Body of pancreas (tissue), 4 donors: ENCODE measurements at regions of chr16 and their contacts with region 1.

Region 1: GRCh38 chr16:15548482-15548891 is 94.5 kb downstream of the MARF1 start:
- DNase-seq: no peak
- ATAC-seq: no peak
- H3K4me3 ChIP-seq: no peak overlapping the region
- H3K27ac ChIP-seq: no peak overlapping the region
- H3K4me1 ChIP-seq: peaks cover 11% of the 10 kb centered on the region
- H3K27me3 ChIP-seq: no peaks in the 10 kb centered on the region
- CTCF ChIP-seq: no peak
- POLR2A ChIP-seq: no peak

Region 2: GRCh38 chr16:14667347-14668266 is 880.9 kb before region 1 on chr16:
- intact Hi-C with region 1: no loop called
- DNase-seq: peak in 3 of 4 donors; percentile 17 to 38 (median 25)
- ATAC-seq: no peak
- H3K4me3 ChIP-seq: no peak overlapping the region
- H3K27ac ChIP-seq: peak overlapping the region in 3 of 4 donors; percentile 33 to 62 (median 47)
- H3K4me1 ChIP-seq: peaks cover 53% of the 10 kb centered on the region
- H3K27me3 ChIP-seq: no peaks in the 10 kb centered on the region
- CTCF ChIP-seq: no peak
- POLR2A ChIP-seq: no peak

Region 3: GRCh38 chr16:15434425-15435215 is 113.9 kb before region 1 on chr16 and contains the start of gene BMERB1:
- intact Hi-C with region 1: loop called (anchors 5 kb)
- DNase-seq: peak; percentile 70 to 75 (median 71)
- ATAC-seq: peak; percentile 84
- H3K4me3 ChIP-seq: peak within 1 kb of the TSS; percentile 70 to 78
- H3K27ac ChIP-seq: peak within 1 kb of the TSS in 3 of 4 donors; percentile 41 to 65 (median 44)
- H3K4me1 ChIP-seq: peaks cover 12% of the 10 kb centered on the region
- H3K27me3 ChIP-seq: no peaks in the 10 kb centered on the region
- CTCF ChIP-seq: no peak
- POLR2A ChIP-seq: peak in 2 of 3 donors; percentile 55 to 66
- total RNA-seq, gene BMERB1: 8.9 to 22.3 TPM

Region 4: DNA sequence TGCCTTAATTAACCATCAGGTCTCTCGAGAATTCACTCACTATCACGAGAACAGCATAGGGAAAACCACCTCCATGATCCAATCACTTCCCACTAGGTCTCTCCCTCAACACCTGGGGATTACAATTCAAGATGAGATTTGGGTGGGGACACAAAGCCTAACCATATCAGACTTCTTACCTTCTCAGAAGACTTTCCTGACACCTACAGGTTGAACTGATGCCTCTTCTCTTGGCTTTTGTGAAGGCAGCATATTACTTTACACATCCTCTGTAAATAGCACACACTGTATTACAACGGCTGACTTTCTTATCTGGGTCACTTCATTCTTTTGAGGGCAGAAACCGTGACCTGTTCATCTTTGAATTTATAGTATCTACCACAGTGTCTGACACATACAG is 90.5 kb before region 1 on chr16:
- intact Hi-C with region 1: no loop called
- DNase-seq: no peak
- ATAC-seq: no peak
- H3K4me3 ChIP-seq: no peak overlapping the region
- H3K27ac ChIP-seq: peak overlapping the region in 1 of 4 donors; percentile 7
- H3K4me1 ChIP-seq: peaks cover 47% of the 10 kb centered on the region
- H3K27me3 ChIP-seq: no peaks in the 10 kb centered on the region
- CTCF ChIP-seq: peak in 1 of 7 experiments; percentile 11
- POLR2A ChIP-seq: no peak

Region 5: GRCh38 chr16:15482068-15482747 is 66.3 kb before region 1 on chr16:
- intact Hi-C with region 1: loop called (anchors 10 kb)
- DNase-seq: peak; percentile 84 to 94 (median 90)
- ATAC-seq: peak; percentile 99
- H3K4me3 ChIP-seq: no peak overlapping the region
- H3K27ac ChIP-seq: peak overlapping the region in 3 of 4 donors; percentile 64 to 74 (median 66)
- H3K4me1 ChIP-seq: peaks cover 12% of the 10 kb centered on the region
- H3K27me3 ChIP-seq: no peaks in the 10 kb centered on the region
- CTCF ChIP-seq: peak in 4 of 7 experiments; percentile 27 to 43 (median 35)
- POLR2A ChIP-seq: peak in 2 of 3 donors; percentile 9 to 15

Region 6: GRCh38 chr16:15777533-15778203 is 229.2 kb after region 1 on chr16:
- intact Hi-C with region 1: no loop called
- DNase-seq: peak in 2 of 4 donors; percentile 20 to 28
- ATAC-seq: no peak
- H3K4me3 ChIP-seq: no peak overlapping the region
- H3K27ac ChIP-seq: no peak overlapping the region
- H3K4me1 ChIP-seq: no peaks in the 10 kb centered on the region
- H3K27me3 ChIP-seq: no peaks in the 10 kb centered on the region
- CTCF ChIP-seq: peak in 2 of 7 experiments; percentile 17 to 43
- POLR2A ChIP-seq: no peak